ENCODE measurements at regions of chr6 and their contacts with region 1.

Region 1: GRCh38 chr6:42782622-42783176 is 847 bp downstream of the BICRAL start:
- DNase-seq: peak; percentile 73
- ATAC-seq: peak; percentile 38
- H3K4me3 Mint-ChIP-seq: peak overlapping the region; percentile 95
- H3K27ac Mint-ChIP-seq: peak overlapping the region; percentile 99
- H3K4me1 Mint-ChIP-seq: peaks cover 34% of the 10 kb centered on the region
- H3K27me3 Mint-ChIP-seq: no peaks in the 10 kb centered on the region

Region 2: GRCh38 chr6:42702200-42702599 is 80.5 kb before region 1 on chr6:
- POLR2A ChIA-PET with region 1: no interaction called
- DNase-seq: no peak
- ATAC-seq: no peak
- H3K4me3 Mint-ChIP-seq: no peak overlapping the region
- H3K27ac Mint-ChIP-seq: no peak overlapping the region
- H3K4me1 Mint-ChIP-seq: peaks cover 3% of the 10 kb centered on the region
- H3K27me3 Mint-ChIP-seq: no peaks in the 10 kb centered on the region

Region 3: GRCh38 chr6:42771741-42772100 is 11.0 kb before region 1 on chr6:
- POLR2A ChIA-PET with region 1: interaction called, 168 read pairs
- DNase-seq: no peak
- ATAC-seq: no peak
- H3K4me3 Mint-ChIP-seq: peak overlapping the region; percentile 83
- H3K27ac Mint-ChIP-seq: peak overlapping the region; percentile 100
- H3K4me1 Mint-ChIP-seq: peaks cover 43% of the 10 kb centered on the region
- H3K27me3 Mint-ChIP-seq: peaks cover 2% of the 10 kb centered on the region

Region 4: DNA sequence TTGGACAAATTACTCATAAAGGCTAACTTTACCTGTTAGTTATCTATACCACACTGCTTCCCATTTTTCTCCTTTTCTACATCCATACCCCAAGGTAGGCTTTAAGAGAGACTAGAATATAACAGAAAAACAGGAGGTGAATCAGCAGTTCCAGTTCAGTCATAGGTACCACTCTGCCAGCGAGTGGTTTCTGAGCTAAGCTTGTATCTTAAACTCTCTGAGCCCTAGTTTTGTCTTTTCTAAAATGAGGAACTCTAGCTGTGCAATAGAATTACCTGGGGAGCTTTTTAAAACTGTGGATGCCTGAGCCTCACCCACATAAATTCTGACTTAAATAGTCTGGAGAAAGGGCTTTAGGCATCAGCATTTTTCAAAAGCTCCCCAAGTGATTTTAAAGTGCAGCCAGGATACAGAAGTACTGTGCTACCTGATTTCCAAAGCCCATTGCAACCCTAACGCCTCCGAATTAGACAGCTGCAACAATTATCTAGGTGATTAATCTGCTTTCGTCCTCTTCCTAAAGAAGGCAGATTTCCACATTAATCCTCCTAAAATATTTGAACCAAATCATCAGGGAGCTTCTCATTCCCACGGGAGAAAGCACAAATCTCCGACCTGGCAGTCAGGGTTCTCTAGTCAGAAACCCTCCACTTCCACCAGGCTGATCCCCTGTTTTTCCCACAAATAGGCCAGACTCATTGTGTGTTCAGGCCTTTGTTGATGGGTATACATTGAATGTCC is 59.3 kb after region 1 on chr6:
- POLR2A ChIA-PET with region 1: no interaction called
- DNase-seq: no peak
- ATAC-seq: no peak
- H3K4me3 Mint-ChIP-seq: no peak overlapping the region
- H3K27ac Mint-ChIP-seq: no peak overlapping the region
- H3K4me1 Mint-ChIP-seq: peaks cover 5% of the 10 kb centered on the region
- H3K27me3 Mint-ChIP-seq: no peaks in the 10 kb centered on the region

Region 5: DNA sequence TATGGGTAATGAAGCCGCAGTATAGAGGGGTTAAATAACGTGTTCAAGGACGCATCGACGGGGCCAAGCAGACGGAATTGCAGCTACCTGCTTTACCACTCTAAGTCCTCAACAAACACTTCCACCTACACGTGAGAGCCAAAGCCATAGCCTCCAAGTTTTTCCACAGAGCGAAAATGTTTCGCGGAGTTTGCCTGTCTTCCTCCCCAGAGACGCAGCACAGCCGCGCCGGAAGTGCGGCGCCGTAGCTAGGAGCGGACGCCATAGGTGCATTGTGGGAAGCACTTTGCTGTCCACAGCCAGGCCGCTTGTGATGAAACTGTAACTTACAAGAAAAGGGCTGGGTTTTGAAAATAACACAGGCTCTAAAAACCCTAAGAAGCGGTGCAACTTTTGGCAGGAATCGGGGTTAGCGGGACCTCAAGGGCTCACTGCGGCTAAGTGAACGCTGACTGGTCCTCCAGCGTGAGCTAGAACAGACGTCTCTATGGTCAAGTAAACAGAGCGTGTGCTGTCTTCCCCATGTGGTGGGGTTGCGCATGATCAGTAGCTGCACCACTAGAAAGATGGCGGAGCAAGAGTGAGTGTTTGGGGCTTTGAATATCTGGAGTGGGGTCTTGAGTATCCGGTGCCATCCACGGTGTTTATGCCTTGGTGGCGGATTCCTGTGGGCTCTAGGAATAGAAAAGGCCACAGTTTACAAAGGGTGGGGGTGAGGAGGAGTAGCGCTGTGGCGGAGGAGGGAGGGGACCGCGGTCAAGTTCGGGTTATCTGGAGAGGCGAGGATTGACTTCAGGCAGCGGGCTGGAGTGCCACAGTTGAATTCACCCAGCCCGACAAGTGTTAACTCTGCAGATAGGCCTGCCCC is 96.9 kb after region 1 on chr6 and contains the start of gene RPL7L1:
- POLR2A ChIA-PET with region 1: interaction called, 10 read pairs
- DNase-seq: peak; percentile 82
- ATAC-seq: peak; percentile 97
- H3K4me3 Mint-ChIP-seq: peak within 1 kb of the TSS; percentile 91
- H3K27ac Mint-ChIP-seq: peak within 1 kb of the TSS; percentile 96
- H3K4me1 Mint-ChIP-seq: peaks cover 12% of the 10 kb centered on the region
- H3K27me3 Mint-ChIP-seq: no peaks in the 10 kb centered on the region
- total RNA-seq, gene RPL7L1: 77.6 to 79.3 TPM

Region 6: DNA sequence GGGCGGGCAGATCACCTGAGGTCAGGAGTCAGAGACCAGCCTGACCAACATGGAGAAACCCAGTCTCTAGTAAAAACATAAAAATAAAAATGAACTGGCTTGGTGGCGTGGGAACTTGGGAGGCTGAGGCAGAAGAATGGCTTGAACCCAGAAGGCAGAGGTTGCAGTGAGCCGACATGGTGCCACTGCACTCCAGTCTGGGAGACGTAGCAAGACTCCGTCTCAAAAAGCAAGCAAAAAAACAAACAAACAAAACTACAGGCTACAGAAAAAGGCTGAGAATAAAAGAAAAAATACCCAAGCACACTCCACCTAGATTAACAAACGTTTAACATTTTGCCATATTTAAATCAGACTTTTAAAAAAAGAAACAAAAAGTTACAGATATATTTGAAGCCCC is 139.1 kb after region 1 on chr6:
- POLR2A ChIA-PET with region 1: no interaction called
- DNase-seq: no peak
- ATAC-seq: no peak
- H3K4me3 Mint-ChIP-seq: no peak overlapping the region
- H3K27ac Mint-ChIP-seq: no peak overlapping the region
- H3K4me1 Mint-ChIP-seq: no peaks in the 10 kb centered on the region
- H3K27me3 Mint-ChIP-seq: no peaks in the 10 kb centered on the region

Measured in activated naive CD8-positive, alpha-beta T cell treated with anti-CD3 and anti-CD28 coated beads, Interleukin-2, amount 10 ng/mL, durations not matched to agents 7 days and 5 days (primary cell).